PC-3 (cell line): ENCODE measurements at regions of chr9 and their contacts with region 1.

Region 1: GRCh38 chr9:110427497-110428104 is 89.9 kb upstream of the TXNDC8 start:
- DNase-seq: peak; percentile 69
- ATAC-seq: peak; percentile 77
- H3K4me3 ChIP-seq: no peak overlapping the region
- H3K27ac ChIP-seq: no peak overlapping the region
- H3K4me1 ChIP-seq: no peaks in the 10 kb centered on the region
- H3K27me3 ChIP-seq: no peaks in the 10 kb centered on the region
- CTCF ChIP-seq: peak; percentile 82

Region 2: DNA sequence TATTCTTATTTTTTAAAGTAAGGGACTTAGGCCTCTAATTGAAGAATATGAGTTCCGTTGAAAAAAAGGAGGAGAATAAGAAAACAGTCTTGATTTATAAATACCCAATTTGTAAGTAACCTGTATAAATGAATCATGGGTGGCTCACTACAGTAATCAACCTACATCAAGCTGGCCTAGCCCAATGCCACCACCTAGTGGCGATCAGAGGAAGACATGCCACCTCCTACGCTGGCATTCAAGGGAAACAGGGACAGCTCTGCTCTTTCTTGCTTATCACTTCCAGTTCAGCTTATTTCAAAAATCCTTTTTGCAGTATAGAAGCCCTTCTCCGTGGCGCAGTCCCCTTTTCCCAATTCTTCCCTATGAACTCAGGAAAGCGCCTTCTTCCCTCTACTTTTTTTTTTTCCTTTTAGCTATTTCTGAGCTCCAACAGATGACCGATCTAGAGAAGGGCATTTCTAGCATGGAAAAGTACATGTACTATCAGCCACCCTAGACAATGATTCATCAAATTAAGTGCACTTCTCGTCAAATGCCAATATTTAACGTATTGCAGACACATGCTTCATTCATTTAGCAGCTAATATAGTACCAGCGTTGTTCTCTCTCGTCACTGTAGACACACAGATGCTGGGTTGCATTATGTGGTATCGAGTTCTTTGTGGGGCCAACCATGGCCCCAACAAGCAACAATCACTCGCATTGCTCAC is 957.8 kb before region 1 on chr9:
- CTCF ChIA-PET with region 1: no interaction called
- POLR2A ChIA-PET with region 1: no interaction called
- intact Hi-C with region 1: no loop called
- DNase-seq: peak; percentile 80
- ATAC-seq: peak; percentile 95
- H3K4me3 ChIP-seq: no peak overlapping the region
- H3K27ac ChIP-seq: no peak overlapping the region
- H3K4me1 ChIP-seq: peaks cover 19% of the 10 kb centered on the region; the same call in 1 of the 2 replicates
- H3K27me3 ChIP-seq: no peaks in the 10 kb centered on the region
- CTCF ChIP-seq: peak; percentile 83

Region 3: DNA sequence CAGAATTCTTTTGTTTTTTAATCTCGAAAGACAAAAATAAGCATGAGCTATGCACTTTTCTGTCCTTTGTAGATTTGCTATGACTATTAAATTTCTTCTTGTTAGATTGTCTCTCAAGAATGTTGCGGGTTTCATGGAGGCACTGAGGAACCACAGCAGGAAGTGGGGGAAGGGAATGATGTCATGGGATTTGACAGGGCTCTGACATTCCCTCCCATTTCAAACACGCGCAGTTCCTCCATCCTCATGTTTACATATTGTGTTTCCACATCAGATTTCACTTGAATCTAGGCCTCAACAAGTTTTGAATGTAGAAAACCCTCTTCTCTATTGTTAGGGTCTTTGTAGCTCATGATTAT is 492.8 kb before region 1 on chr9:
- CTCF ChIA-PET with region 1: no interaction called
- POLR2A ChIA-PET with region 1: no interaction called
- intact Hi-C with region 1: no loop called
- DNase-seq: no peak
- ATAC-seq: no peak
- H3K4me3 ChIP-seq: no peak overlapping the region
- H3K27ac ChIP-seq: no peak overlapping the region
- H3K4me1 ChIP-seq: no peaks in the 10 kb centered on the region
- H3K27me3 ChIP-seq: no peaks in the 10 kb centered on the region
- CTCF ChIP-seq: no peak

Region 4: DNA sequence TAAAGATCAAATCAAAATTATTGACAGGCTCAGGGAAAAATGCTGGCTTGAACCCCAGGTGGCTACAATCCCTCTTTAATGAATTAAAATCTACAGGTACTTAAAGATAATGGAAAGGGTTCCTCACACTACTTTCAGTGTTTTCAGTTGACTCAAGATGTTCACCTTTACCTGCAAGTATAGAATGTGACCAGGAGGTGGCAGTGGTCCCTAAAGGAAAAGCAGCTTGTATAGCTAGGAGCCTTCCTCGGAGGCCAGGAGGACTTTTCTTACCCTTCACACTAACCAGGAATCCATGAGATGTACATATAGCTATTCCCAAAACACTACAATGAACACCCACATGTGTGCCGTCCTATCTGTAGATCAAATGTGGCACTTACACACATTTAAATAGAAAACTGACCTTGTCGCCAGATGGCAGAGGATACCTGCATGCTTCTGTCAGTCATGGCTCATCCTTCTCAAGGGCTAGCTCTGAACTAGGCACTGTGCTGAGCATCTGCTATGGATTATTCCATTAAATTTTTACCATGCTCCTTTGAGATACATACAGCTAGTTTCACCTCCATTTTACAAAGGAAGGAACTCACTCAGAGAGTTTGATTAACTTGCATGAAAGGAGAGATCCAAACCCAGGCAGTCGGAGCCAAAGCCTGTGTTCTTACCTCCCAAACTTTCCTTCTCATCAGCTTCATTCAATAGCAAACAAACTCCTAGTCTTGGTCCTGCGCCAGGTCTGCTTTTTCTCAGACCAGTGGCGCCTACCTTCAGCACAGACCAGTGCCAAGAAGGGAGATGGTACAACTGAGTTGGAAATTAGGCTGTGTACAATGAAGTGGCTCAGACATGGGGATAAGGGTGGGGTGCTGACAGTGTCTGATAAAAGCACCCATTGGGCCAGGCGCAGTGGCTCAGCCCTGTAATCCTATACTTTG is 244.1 kb before region 1 on chr9:
- CTCF ChIA-PET with region 1: no interaction called
- POLR2A ChIA-PET with region 1: no interaction called
- intact Hi-C with region 1: loop called (anchors 5 kb)
- DNase-seq: peak; percentile 80
- ATAC-seq: peak; percentile 66
- H3K4me3 ChIP-seq: no peak overlapping the region
- H3K27ac ChIP-seq: no peak overlapping the region
- H3K4me1 ChIP-seq: peaks cover 20% of the 10 kb centered on the region
- H3K27me3 ChIP-seq: no peaks in the 10 kb centered on the region
- CTCF ChIP-seq: peak; percentile 81

Region 5: DNA sequence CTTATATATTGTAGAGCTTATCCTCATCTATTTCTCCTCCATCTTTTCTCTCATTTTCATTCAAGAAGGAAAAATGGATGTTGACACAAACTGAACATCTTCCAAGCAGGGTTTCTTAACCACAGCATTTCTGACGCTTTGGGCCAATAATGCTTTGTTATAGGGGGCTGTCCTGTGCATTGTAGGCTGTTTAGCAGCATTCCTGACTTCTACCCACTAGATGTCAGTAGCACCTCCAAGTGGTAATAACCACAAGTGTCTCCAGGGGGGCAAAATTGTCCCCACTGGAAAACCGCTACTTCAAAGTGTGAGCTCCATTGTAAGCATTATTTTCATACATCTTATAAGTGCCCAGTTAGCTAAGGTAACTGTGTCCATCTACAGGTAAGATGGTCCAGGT is 87.3 kb before region 1 on chr9:
- CTCF ChIA-PET with region 1: no interaction called
- POLR2A ChIA-PET with region 1: no interaction called
- intact Hi-C with region 1: loop called (anchors 5 kb)
- DNase-seq: peak; percentile 37
- ATAC-seq: peak; percentile 48; the same call in 1 of the 2 replicates
- H3K4me3 ChIP-seq: no peak overlapping the region
- H3K27ac ChIP-seq: no peak overlapping the region
- H3K4me1 ChIP-seq: no peaks in the 10 kb centered on the region
- H3K27me3 ChIP-seq: no peaks in the 10 kb centered on the region
- CTCF ChIP-seq: peak; percentile 69

Region 6: DNA sequence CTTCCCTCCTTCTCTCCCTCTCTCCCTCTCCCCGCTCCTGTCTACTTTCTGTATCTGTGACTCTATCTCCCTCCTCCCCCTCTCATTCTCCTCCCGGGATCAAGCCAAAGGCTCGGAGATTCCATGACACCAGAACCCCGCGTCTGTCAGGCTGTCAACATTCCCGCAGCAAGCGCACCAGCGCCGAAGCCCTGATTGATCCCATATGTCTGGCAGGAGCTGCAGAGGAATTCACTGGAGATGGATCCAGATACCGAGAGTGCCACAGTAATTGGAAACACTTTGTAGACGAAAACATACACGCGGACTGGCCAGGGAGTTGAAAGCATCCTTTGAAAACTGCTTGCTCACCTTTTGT is 152.2 kb after region 1 on chr9:
- CTCF ChIA-PET with region 1: no interaction called
- POLR2A ChIA-PET with region 1: no interaction called
- intact Hi-C with region 1: loop called (anchors 10 kb)
- DNase-seq: no peak
- ATAC-seq: no peak
- H3K4me3 ChIP-seq: no peak overlapping the region
- H3K27ac ChIP-seq: no peak overlapping the region
- H3K4me1 ChIP-seq: peaks cover 10% of the 10 kb centered on the region; the same call in 1 of the 2 replicates
- H3K27me3 ChIP-seq: no peaks in the 10 kb centered on the region
- CTCF ChIP-seq: no peak